Ascending aorta (tissue), 2 donors: ENCODE measurements at regions of chr2 and their contacts with region 1.

Region 1: GRCh38 chr2:207473049-207473930 is 56.5 kb upstream of the CREB1 start:
- DNase-seq: peak in 1 of 2 donors; percentile 70
- H3K4me3 ChIP-seq: peak overlapping the region in 1 of 2 donors; percentile 52
- H3K27ac ChIP-seq: peak overlapping the region in 1 of 2 donors; percentile 7
- H3K4me1 ChIP-seq: peaks cover 0 to 3% of the 10 kb centered on the region in 2 donors
- H3K27me3 ChIP-seq: no peaks in the 10 kb centered on the region
- CTCF ChIP-seq: peak; percentile 45 to 80 (median 58)

Region 2: GRCh38 chr2:206800506-206801417 is 672.5 kb before region 1 on chr2:
- intact Hi-C with region 1: loop called (anchors 1 kb)
- DNase-seq: peak in 1 of 2 donors; percentile 79
- H3K4me3 ChIP-seq: no peak overlapping the region
- H3K27ac ChIP-seq: no peak overlapping the region
- H3K4me1 ChIP-seq: peaks cover 0 to 4% of the 10 kb centered on the region in 2 donors
- H3K27me3 ChIP-seq: no peaks in the 10 kb centered on the region
- CTCF ChIP-seq: peak; percentile 51 to 67 (median 60)

Region 3: DNA sequence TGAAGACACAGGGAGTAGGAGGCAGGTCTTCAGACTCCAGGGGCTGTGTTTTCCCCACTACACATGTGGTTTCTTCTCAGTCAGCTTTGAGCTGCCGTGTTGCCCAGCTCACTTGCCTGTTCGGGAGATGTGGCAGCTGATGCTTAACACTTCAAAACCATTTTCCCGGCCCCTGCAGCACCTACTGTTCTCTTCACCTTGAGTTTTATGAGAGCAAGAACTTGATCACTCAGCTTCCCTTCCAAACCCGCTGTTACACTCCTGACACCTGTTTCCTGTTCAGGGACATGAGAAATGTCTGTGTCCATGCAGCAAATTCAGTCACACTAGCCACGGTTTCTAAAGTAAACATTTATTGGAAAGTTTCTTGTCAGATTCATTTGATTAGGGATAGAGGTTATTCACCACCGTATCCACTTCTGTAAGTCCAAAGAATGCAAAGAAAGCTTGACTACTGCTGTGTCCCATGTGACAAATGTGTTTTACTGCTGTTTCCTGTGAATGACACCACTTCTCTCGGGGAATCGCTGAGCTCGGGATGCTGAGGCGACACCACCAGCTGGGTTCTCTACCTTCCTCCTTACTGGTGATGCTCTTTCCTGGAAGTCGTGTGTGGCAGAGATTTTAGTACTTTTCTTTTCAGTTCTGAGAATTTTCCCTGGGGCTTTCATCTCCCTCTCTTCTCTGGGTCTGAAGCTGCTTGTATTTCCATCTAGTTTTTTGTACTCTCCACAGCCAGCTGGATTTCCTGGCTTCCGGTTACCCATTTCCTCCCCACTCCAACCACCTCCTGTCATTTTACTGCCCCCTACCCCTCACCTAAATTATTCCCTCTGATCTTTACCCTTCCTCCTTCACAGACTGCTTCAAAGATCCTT is 399.2 kb before region 1 on chr2:
- intact Hi-C with region 1: loop called (anchors 10 kb)
- DNase-seq: no peak
- H3K4me3 ChIP-seq: no peak overlapping the region
- H3K27ac ChIP-seq: peak overlapping the region; percentile 2 to 45
- H3K4me1 ChIP-seq: peaks cover 0 to 8% of the 10 kb centered on the region in 2 donors
- H3K27me3 ChIP-seq: no peaks in the 10 kb centered on the region
- CTCF ChIP-seq: no peak